GM23248 (cell line): ENCODE measurements at regions of chr10 and their contacts with region 1.

Region 1: GRCh38 chr10:124530215-124530665 is 68.6 kb downstream of the LHPP start:
- DNase-seq: peak; percentile 91
- H3K4me3 ChIP-seq: no peak overlapping the region
- H3K27ac ChIP-seq: no peak overlapping the region
- H3K4me1 ChIP-seq: no peaks in the 10 kb centered on the region
- H3K27me3 ChIP-seq: no peaks in the 10 kb centered on the region

Region 2: GRCh38 chr10:124428207-124428777 is 101.9 kb before region 1 on chr10:
- in situ Hi-C with region 1: no loop called
- DNase-seq: no peak
- H3K4me3 ChIP-seq: no peak overlapping the region
- H3K27ac ChIP-seq: no peak overlapping the region
- H3K4me1 ChIP-seq: no peaks in the 10 kb centered on the region
- H3K27me3 ChIP-seq: peaks cover 47% of the 10 kb centered on the region

Region 3: GRCh38 chr10:124722798-124723783 is 192.9 kb after region 1 on chr10:
- in situ Hi-C with region 1: no loop called
- DNase-seq: peak; percentile 73
- H3K4me3 ChIP-seq: no peak overlapping the region
- H3K27ac ChIP-seq: peak overlapping the region; percentile 57
- H3K4me1 ChIP-seq: peaks cover 16% of the 10 kb centered on the region
- H3K27me3 ChIP-seq: no peaks in the 10 kb centered on the region

Region 4: GRCh38 chr10:124741281-124741921 is 211.2 kb after region 1 on chr10:
- in situ Hi-C with region 1: loop called (anchors 10 kb)
- DNase-seq: peak; percentile 87
- H3K4me3 ChIP-seq: peak overlapping the region; percentile 55
- H3K27ac ChIP-seq: no peak overlapping the region; the same call in 1 of the 2 replicates
- H3K4me1 ChIP-seq: peaks cover 49% of the 10 kb centered on the region
- H3K27me3 ChIP-seq: no peaks in the 10 kb centered on the region